ENCODE measurements at regions of chr6 and their contacts with region 1.

Region 1: GRCh38 chr6:106534564-106534982 is 94.7 kb downstream of the RTN4IP1 start:
- DNase-seq: no peak
- H3K4me3 Mint-ChIP-seq: no peak overlapping the region
- H3K27ac Mint-ChIP-seq: peak overlapping the region; percentile 70
- H3K4me1 Mint-ChIP-seq: peaks cover 71% of the 10 kb centered on the region
- H3K27me3 Mint-ChIP-seq: no peaks in the 10 kb centered on the region

Region 2: GRCh38 chr6:106512048-106512967 is 22.3 kb before region 1 on chr6:
- CTCF ChIA-PET with region 1: interaction called, 10 read pairs
- POLR2A ChIA-PET with region 1: no interaction called
- DNase-seq: peak; percentile 85
- H3K4me3 Mint-ChIP-seq: peak overlapping the region; percentile 94
- H3K27ac Mint-ChIP-seq: peak overlapping the region; percentile 99
- H3K4me1 Mint-ChIP-seq: peaks cover 53% of the 10 kb centered on the region
- H3K27me3 Mint-ChIP-seq: peaks cover 5% of the 10 kb centered on the region